ENCODE measurements at regions of chr11 and their contacts with region 1.

Region 1: DNA sequence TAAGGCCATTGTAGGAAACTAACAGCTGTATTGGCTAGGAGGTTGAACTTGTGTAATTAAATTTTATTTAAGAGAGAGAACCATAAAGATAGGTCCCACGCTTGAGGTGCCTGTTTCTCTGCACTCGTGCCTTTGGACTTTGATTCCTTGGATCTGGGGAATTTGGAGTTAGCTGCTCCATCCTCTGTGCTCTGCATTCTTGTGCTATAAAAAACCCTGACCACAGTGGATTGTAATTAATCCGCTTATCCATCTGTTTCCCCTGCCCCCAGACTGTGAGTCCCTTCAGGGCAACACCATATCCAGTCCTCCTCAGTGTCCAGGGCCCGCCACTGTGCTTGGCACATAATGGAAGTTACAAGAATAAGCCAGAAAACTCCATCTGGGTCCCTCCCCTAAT is 169.8 kb downstream of the SPON1 start:
- DNase-seq: no peak
- ATAC-seq: no peak
- H3K4me3 ChIP-seq: no peak overlapping the region
- H3K27ac ChIP-seq: no peak overlapping the region
- H3K4me1 ChIP-seq: no peaks in the 10 kb centered on the region
- H3K27me3 ChIP-seq: no peaks in the 10 kb centered on the region
- CTCF ChIP-seq: no peak
- POLR2A ChIP-seq: no peak

Region 2: DNA sequence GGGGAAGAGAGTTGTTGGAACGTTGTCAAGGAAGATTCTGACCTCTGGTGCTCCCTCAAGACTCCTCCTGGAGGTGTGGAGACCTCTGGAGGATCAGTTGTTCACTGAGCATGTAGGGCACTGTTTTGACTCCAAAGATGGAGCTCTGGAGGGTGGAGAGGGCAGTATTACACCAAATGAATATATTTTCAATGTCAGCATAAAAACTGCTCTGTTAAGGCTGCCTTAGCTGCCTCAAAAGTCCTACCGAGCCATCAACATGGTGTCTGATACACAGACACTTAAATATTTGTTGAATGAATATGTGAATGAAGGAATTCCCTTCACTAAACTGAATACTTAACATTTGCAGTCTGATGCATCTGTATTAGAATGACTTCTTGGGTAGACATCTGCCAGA is 314.0 kb before region 1 on chr11:
- intact Hi-C with region 1: no loop called
- DNase-seq: no peak
- ATAC-seq: no peak
- H3K4me3 ChIP-seq: no peak overlapping the region
- H3K27ac ChIP-seq: no peak overlapping the region
- H3K4me1 ChIP-seq: no peaks in the 10 kb centered on the region
- H3K27me3 ChIP-seq: no peaks in the 10 kb centered on the region
- CTCF ChIP-seq: no peak
- POLR2A ChIP-seq: no peak

Region 3: GRCh38 chr11:13970986-13971385 is 161.3 kb before region 1 on chr11:
- intact Hi-C with region 1: loop called in 1 of 2 experiments (anchors 10 kb)
- DNase-seq: peak in 1 of 3 donors; percentile 31
- ATAC-seq: peak; percentile 52 to 78 (median 68)
- H3K4me3 ChIP-seq: no peak overlapping the region
- H3K27ac ChIP-seq: no peak overlapping the region
- H3K4me1 ChIP-seq: no peaks in the 10 kb centered on the region
- H3K27me3 ChIP-seq: no peaks in the 10 kb centered on the region
- CTCF ChIP-seq: peak in 3 of 4 donors; percentile 40 to 57 (median 44)
- POLR2A ChIP-seq: no peak

Region 4: DNA sequence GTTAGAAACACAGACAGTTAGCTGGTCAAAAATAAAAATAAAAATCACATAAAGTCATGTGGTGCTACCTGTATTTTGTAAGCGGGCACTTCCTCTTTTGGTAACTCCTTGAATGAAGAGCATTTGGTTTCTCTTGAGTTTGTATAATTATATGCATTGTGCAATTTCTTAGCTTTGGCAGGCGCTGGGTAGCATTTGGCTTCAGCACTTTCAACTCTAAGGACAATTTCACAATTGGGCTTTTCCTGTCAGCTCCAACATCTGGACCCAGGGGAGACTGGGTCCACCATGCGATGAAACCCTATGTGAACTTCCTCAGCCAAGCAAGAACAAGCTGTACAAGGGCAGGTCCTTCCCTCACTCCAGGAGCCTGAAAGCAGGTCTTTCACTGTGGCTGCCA is 57.6 kb after region 1 on chr11:
- intact Hi-C with region 1: no loop called
- DNase-seq: peak in 1 of 3 donors; percentile 63
- ATAC-seq: peak; percentile 87 to 96 (median 88)
- H3K4me3 ChIP-seq: no peak overlapping the region
- H3K27ac ChIP-seq: no peak overlapping the region
- H3K4me1 ChIP-seq: peaks cover 0 to 21% (median 4%) of the 10 kb centered on the region in 4 donors
- H3K27me3 ChIP-seq: no peaks in the 10 kb centered on the region
- CTCF ChIP-seq: no peak
- POLR2A ChIP-seq: no peak

Region 5: GRCh38 chr11:14746857-14747395 is 614.6 kb after region 1 on chr11:
- intact Hi-C with region 1: no loop called
- DNase-seq: no peak
- ATAC-seq: no peak
- H3K4me3 ChIP-seq: no peak overlapping the region
- H3K27ac ChIP-seq: no peak overlapping the region
- H3K4me1 ChIP-seq: peaks cover 0 to 3% (median 1%) of the 10 kb centered on the region in 4 donors
- H3K27me3 ChIP-seq: no peaks in the 10 kb centered on the region
- CTCF ChIP-seq: no peak
- POLR2A ChIP-seq: no peak